ENCODE measurements at regions of chr21 and their contacts with region 1.

Region 1: GRCh38 chr21:45129189-45129923 is 55.0 kb downstream of the ADARB1 start:
- DNase-seq: peak; percentile 46
- H3K4me3 ChIP-seq: no peak overlapping the region
- H3K27ac ChIP-seq: no peak overlapping the region
- H3K4me1 ChIP-seq: peaks cover 19% of the 10 kb centered on the region
- H3K27me3 ChIP-seq: no peaks in the 10 kb centered on the region
- CTCF ChIP-seq: no peak

Region 2: GRCh38 chr21:44801468-44802395 is 327.6 kb before region 1 on chr21 and contains the start of gene UBE2G2:
- CTCF ChIA-PET with region 1: interaction called, 3 read pairs
- dilution Hi-C with region 1: loop called (anchors 5 kb)
- in situ Hi-C with region 1: no loop called
- intact Hi-C with region 1: loop called (anchors 2 kb)
- DNase-seq: peak; percentile 79
- H3K4me3 ChIP-seq: peak within 1 kb of the TSS; percentile 71 to 98 (median 92)
- H3K27ac ChIP-seq: peak within 1 kb of the TSS; percentile 58
- H3K4me1 ChIP-seq: peaks cover 12% of the 10 kb centered on the region
- H3K27me3 ChIP-seq: no peaks in the 10 kb centered on the region
- CTCF ChIP-seq: no peak
- total RNA-seq, gene UBE2G2: 85.7 to 93.1 TPM

Region 3: GRCh38 chr21:44927587-44928461 is 201.5 kb before region 1 on chr21:
- CTCF ChIA-PET with region 1: interaction called, 17 read pairs
- dilution Hi-C with region 1: no loop called
- in situ Hi-C with region 1: no loop called
- intact Hi-C with region 1: no loop called
- DNase-seq: peak; percentile 89
- H3K4me3 ChIP-seq: peak overlapping the region in 1 of 3 experiments; percentile 33
- H3K27ac ChIP-seq: peak overlapping the region; percentile 91
- H3K4me1 ChIP-seq: peaks cover 52% of the 10 kb centered on the region
- H3K27me3 ChIP-seq: no peaks in the 10 kb centered on the region
- CTCF ChIP-seq: peak in 1 of 2 donors; percentile 37

Region 4: DNA sequence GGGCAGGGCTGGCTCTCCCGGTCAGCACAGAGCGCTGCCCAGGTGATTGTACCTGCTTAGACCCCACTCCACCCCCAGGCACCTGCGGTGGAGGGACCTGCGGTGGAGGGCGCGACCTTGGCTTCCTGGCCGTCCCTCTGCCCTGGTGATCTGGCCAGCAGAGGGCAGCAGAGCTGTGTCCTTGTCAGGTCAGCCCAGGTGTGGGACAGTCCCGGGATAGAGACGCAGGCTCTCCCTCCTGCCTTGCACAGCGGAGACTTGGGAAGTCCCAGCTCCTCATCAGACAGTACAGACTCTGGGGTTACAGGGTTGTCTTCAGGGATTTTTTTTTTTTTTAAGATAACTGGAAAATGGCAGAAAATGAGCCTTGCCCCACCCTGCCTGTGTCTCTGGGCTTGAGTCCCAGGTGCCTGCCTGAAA is 179.6 kb before region 1 on chr21:
- CTCF ChIA-PET with region 1: interaction called, 19 read pairs
- dilution Hi-C with region 1: no loop called
- in situ Hi-C with region 1: loop called in 1 of 2 experiments (anchors 5 kb)
- intact Hi-C with region 1: loop called (anchors 1 kb)
- DNase-seq: peak; percentile 70
- H3K4me3 ChIP-seq: no peak overlapping the region
- H3K27ac ChIP-seq: no peak overlapping the region
- H3K4me1 ChIP-seq: peaks cover 10% of the 10 kb centered on the region
- H3K27me3 ChIP-seq: no peaks in the 10 kb centered on the region
- CTCF ChIP-seq: peak; percentile 87 to 94

Region 5: DNA sequence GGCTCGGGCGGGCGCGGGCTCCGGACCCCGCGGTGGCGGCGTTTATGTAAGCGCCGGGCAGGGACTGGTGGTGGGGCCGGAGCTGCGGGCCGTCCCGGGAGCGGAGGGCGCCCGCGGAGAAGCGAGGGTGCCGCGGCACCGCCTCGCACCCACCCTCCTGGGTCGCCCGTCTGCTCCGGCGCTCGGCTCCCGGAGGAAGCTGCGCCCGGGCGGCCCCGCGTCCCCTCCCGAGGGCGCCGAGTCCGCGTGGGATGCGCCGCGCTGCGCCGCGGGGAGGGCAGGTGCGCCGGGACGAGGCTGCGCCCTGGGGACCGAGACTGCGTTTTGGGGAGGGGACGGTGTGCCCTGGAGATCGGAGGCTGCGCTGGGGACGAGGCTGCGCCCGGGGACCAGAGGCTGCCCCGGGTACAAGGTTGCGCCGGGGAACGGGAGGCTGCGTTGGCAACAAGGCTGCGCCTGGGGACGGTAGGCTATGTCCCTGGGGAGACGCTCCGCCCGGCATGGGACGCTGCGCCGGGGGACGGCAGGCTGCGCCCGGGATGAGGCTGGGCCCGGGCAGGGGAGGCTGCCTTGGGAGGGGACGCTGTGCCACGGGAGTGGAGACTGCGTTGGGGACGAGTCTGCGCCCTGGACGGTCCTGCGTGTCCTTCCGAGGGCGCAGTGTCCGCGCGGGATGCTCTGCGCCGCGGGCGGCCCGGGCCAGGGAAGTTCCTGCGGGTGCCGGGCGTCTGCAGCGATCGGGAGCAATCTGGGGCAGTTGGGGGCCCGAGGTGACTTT is 54.3 kb before region 1 on chr21:
- CTCF ChIA-PET with region 1: no interaction called
- dilution Hi-C with region 1: no loop called
- in situ Hi-C with region 1: no loop called
- intact Hi-C with region 1: loop called (anchors 2 kb)
- DNase-seq: peak; percentile 60
- H3K4me3 ChIP-seq: peak overlapping the region; percentile 58 to 96 (median 87)
- H3K27ac ChIP-seq: peak overlapping the region; percentile 30
- H3K4me1 ChIP-seq: peaks cover 39% of the 10 kb centered on the region
- H3K27me3 ChIP-seq: no peaks in the 10 kb centered on the region
- CTCF ChIP-seq: no peak

Region 6: DNA sequence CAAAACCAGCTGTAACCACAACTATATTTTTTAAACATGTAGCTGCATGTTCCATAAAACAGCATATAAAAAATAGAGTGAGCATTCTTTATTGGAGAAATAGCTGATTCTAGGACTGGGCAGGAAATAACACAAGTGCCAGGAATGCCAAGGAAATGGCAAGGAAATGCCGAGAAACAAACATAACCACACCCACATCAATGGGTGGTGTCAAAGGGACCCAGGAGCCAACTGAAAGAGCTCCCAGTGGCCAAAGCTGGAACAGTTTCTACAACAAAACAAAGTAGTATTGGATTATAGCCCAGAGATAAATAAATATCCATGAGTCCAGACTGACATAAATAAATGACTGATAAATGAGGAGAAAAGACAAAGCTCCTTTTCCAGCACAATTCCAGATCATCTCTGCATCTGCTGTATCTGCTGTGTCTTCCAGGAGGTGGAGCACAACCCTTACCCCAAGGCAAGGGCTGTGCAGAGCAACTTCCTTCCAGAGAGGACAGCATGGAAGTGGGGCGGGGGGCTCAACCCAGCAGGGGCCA is 26.9 kb before region 1 on chr21:
- CTCF ChIA-PET with region 1: interaction called, 10 read pairs
- dilution Hi-C with region 1: no loop called
- in situ Hi-C with region 1: no loop called
- intact Hi-C with region 1: loop called (anchors 2 kb)
- DNase-seq: peak; percentile 67
- H3K4me3 ChIP-seq: no peak overlapping the region
- H3K27ac ChIP-seq: no peak overlapping the region
- H3K4me1 ChIP-seq: peaks cover 29% of the 10 kb centered on the region
- H3K27me3 ChIP-seq: no peaks in the 10 kb centered on the region
- CTCF ChIP-seq: peak; percentile 28 to 41

Region 7: DNA sequence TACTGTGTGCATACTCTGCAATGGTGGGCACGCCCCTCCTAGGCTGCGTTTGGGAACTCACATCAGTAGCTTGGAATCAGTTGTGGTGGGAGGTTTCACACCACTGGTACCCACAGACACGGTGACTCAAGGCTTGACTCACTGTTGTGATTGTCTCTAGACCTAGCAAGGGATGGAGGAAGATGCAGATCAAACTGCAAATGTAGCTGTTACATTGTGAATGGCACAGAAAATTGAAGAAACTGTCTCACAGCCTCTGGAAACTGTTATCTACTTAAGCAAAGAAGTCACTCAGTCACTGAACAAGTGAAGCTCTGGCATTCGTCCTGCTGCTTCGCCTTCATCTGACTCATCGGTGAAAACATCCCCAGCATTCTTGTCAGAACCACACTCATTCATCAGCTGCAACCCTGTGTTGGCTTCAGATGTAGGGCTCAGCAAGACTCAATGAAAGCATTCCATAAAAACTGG is 98.8 kb after region 1 on chr21:
- CTCF ChIA-PET with region 1: no interaction called
- dilution Hi-C with region 1: no loop called
- in situ Hi-C with region 1: no loop called
- intact Hi-C with region 1: no loop called
- DNase-seq: peak; percentile 89
- H3K4me3 ChIP-seq: no peak overlapping the region
- H3K27ac ChIP-seq: no peak overlapping the region
- H3K4me1 ChIP-seq: peaks cover 24% of the 10 kb centered on the region
- H3K27me3 ChIP-seq: peaks cover 11% of the 10 kb centered on the region
- CTCF ChIP-seq: no peak